Cardiac septum (tissue), 1 donor: ENCODE measurements at regions of chr18 and their contacts with region 1.

Region 1: GRCh38 chr18:5237723-5238370 is 40.8 kb upstream of the AKAIN1 start:
- DNase-seq: peak; percentile 93

Region 2: DNA sequence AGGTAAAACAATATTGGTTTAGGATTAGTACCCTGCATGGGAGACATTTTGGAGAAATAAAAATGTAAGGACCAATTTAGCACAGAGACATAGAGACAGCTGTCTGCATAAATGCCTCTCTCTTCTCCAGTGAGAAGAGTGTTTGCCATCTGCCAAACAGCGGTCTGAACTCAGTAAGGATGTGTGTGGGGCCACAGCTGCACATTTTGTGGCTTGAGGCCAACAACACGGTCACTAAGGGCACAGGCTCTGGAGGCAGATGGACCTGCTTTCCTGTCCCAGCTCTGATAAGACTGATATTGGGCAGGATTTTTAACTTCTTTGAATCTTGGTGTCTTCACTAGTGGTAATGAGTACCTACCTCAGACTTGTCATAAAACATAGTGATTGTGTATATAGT is 47.5 kb after region 1 on chr18:
- intact Hi-C with region 1: no loop called
- DNase-seq: no peak

Region 3: GRCh38 chr18:5295981-5296705 is 58.3 kb after region 1 on chr18:
- intact Hi-C with region 1: loop called (anchors 1 kb)
- DNase-seq: peak; percentile 98